Sciatic nerve (tissue), 2 donors: ENCODE measurements at regions of chr1 and their contacts with region 1.

Region 1: GRCh38 chr1:23544444-23545389 is 13.7 kb upstream of the E2F2 start:
- DNase-seq: peak; percentile 87
- ATAC-seq: peak; percentile 77

Region 2: GRCh38 chr1:23577056-23578004 is 32.6 kb after region 1 on chr1:
- intact Hi-C with region 1: no loop called
- DNase-seq: no peak
- ATAC-seq: peak; percentile 67

Region 3: DNA sequence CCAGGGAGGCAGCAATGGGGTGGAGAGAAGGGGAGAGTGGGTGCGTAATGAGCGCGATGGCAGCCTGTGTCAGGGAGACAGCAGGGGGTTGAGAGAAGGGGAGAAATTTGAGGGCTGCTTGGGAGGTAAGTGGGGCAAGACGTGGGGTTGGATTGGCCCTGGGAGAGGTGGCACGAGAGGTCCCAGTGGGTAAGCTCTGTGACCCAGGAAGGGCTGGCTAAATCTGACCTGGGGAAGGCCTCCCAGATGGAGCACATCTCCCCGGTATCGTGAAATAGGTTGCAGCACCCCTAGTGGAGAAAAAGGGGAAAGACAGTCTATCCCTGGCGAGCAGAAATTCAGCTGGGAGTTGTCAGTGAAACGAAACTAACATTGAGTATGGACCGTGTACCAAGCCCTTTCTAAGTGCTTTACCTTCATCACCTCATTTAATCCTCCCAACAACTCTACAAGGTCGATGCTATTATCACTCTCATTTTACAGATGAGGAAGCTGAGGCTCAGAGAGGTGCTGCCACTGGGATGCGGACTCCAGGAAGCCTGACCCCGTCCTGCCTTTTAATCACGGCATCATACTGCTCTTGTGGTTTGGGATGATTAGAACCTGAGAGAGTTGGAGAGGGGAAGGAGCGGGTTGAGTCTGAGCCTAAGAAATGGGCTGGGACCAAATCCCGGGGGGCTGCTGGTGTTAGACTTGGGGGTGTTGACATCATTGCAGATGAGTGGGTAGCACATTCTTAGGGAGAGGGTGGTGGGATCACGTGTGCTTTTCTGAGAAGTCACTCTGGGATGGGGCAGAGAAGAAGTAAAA is 90.3 kb after region 1 on chr1:
- intact Hi-C with region 1: loop called (anchors 1 kb)
- DNase-seq: no peak
- ATAC-seq: peak; percentile 51